A549 (cell line): ENCODE measurements at regions of chr6 and their contacts with region 1.

Region 1: DNA sequence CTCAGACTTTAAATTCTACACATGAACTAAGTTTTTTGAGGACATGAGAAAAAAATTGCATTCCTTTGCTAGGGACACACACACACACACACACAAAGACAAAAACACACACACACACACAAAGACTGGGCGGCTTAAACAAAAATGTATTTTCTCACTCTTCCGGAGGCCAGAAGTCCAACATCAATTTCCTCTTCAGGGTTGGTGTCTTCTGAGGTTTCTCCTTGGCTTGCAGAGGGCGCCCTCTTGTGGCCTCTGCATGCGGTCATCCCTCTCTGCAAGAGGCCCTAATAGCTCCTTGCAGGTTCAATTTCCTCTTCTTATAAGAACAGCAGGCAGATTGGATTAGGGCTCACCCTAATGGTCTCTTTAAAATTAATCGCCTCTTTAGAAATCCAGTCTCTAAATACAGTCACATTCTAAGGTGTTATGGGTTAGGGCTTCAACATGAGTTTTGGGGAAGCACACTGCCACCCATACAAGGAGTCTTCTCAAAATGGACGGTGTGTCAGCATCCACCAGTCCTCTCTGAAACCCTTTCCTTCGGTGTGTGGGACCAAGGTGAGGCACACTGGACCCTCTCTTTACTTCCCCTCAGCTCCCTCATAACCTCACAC is 61.4 kb downstream of the GPR6 start:
- DNase-seq: peak; percentile 53 to 83
- ATAC-seq: peak; percentile 92 to 97
- H3K4me3 ChIP-seq: peak overlapping the region; percentile 17; the same call in 1 of the 3 replicates
- H3K27ac ChIP-seq: no peak overlapping the region
- H3K4me1 ChIP-seq: no peaks in the 10 kb centered on the region
- CTCF ChIP-seq: peak; percentile 82
- EP300 ChIP-seq: no peak
- POLR2A ChIP-seq: no peak
- RAD21 ChIP-seq: peak; percentile 80 to 88

Region 2: DNA sequence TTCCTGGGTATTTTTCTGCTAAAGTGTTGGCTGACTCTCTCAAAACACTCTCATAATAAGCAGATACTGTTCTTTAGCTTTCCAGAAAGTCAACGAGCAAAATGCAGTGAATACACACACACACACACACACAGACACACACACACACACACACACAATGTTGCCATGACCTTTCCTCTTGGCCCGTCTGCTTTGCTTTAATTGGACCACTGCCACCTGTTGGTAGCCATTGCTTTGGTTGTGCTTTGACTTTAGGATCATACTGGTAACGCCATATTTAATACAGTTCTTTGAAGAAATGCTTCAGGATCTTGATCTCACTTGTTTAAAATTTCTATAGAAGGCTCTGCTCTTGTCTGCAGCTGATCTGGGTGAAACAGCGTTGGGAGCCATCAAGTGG is 344.0 kb before region 1 on chr6:
- CTCF ChIA-PET with region 1: interaction called, 31 read pairs
- POLR2A ChIA-PET with region 1: no interaction called
- DNase-seq: peak in 1 of 2 experiments; percentile 24
- ATAC-seq: no peak
- H3K4me3 ChIP-seq: no peak overlapping the region
- H3K27ac ChIP-seq: no peak overlapping the region
- H3K4me1 ChIP-seq: 0 out of 3 replicates have a peak, but pooled peaks cover 3% of the 10 kb centered on the region
- CTCF ChIP-seq: no peak
- EP300 ChIP-seq: no peak
- POLR2A ChIP-seq: no peak
- RAD21 ChIP-seq: no peak

Region 3: GRCh38 chr6:109713097-109713496 is 326.4 kb before region 1 on chr6:
- CTCF ChIA-PET with region 1: interaction called, 56 read pairs
- POLR2A ChIA-PET with region 1: no interaction called
- DNase-seq: no peak
- ATAC-seq: no peak
- H3K4me3 ChIP-seq: no peak overlapping the region
- H3K27ac ChIP-seq: no peak overlapping the region
- H3K4me1 ChIP-seq: no peaks in the 10 kb centered on the region
- CTCF ChIP-seq: no peak
- EP300 ChIP-seq: no peak
- POLR2A ChIP-seq: no peak
- RAD21 ChIP-seq: no peak

Region 4: GRCh38 chr6:110053395-110054240 is 14.1 kb after region 1 on chr6:
- CTCF ChIA-PET with region 1: interaction called, 40 read pairs
- POLR2A ChIA-PET with region 1: no interaction called
- DNase-seq: peak; percentile 36 to 51
- ATAC-seq: peak; percentile 75 to 83; a peak in 5 of 6 replicates
- H3K4me3 ChIP-seq: no peak overlapping the region
- H3K27ac ChIP-seq: no peak overlapping the region
- H3K4me1 ChIP-seq: no peaks in the 10 kb centered on the region
- CTCF ChIP-seq: peak; percentile 68
- EP300 ChIP-seq: no peak
- POLR2A ChIP-seq: no peak
- RAD21 ChIP-seq: peak; percentile 67 to 68

Region 5: DNA sequence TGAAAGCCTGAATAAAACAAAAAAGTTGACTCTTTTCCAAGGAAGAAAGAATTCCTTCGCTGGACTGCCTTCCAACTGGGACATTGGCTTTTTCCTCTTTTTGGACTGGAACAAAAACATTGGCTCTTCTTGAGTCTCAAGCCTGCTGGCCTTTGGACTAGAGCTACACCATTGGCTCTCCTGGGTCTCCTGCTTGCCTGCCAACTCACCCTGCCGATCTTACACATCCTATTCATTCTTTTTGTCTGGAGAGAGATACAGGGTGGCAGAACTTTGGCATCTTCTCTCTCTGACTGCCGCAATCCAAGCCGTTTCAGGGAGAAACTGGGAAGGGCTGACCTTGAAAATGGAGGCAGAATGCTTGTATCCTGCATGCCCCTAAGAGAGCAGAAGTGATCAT is 355.7 kb after region 1 on chr6:
- CTCF ChIA-PET with region 1: interaction called, 28 read pairs
- POLR2A ChIA-PET with region 1: no interaction called
- DNase-seq: no peak
- ATAC-seq: no peak
- H3K4me3 ChIP-seq: no peak overlapping the region
- H3K27ac ChIP-seq: no peak overlapping the region
- H3K4me1 ChIP-seq: no peaks in the 10 kb centered on the region
- CTCF ChIP-seq: no peak
- EP300 ChIP-seq: no peak
- POLR2A ChIP-seq: no peak
- RAD21 ChIP-seq: no peak